ENCODE measurements at regions of chrX and their contacts with region 1.

Region 1: GRCh38 chrX:48917139-48918001 is 1.5 kb downstream of the PIM2 start:
- DNase-seq: peak; percentile 87
- H3K4me3 Mint-ChIP-seq: peak overlapping the region; percentile 98
- H3K27ac Mint-ChIP-seq: peak overlapping the region; percentile 97
- H3K4me1 Mint-ChIP-seq: peaks cover 35% of the 10 kb centered on the region
- H3K27me3 Mint-ChIP-seq: no peaks in the 10 kb centered on the region

Region 2: DNA sequence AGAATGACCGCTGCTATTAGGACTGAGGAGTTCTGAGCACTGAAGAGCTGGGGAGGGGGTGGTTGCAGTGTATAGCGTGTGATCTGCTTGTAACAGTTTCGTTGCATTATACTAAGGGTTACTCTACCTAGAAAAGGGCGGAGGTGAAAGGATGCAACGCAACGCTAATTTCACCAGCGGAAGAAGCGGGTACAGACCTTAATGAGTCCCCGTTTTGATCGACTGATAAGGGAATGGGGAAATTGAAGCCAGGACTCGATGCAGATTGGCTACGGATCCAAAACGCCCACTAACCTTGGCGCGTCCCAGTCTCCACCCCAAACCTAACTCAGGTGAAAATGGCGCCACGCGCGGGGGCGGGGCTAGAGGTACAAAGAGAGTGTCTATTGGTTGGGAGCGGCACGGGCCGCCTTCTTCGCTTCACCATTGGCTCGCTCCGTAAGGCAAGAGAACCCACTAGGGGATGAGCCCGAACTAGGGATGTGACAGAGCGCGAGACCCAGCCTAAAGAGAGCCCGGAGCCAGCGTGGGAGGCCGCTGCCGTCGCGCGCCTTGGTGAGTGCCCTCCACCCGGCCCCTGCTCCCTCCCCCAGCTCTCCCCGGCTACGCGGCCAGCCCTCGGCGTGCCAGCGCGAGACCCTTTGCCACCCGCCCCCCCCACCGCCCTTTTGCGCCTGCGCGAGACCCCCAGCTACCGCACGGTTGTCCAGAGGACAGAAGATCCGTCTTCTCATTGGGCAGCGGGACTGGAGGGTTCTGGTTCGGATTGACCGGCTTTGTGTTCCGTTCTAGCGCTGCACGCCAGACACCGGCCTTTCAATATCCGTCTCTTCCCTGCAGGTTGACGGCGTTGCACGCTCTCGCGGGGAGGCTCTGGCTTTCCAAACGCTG is 395.8 kb before region 1 on chrX and contains the start of gene EBP:
- intact Hi-C with region 1: loop called (anchors 5 kb)
- DNase-seq: peak; percentile 92
- H3K4me3 Mint-ChIP-seq: peak within 1 kb of the TSS; percentile 95
- H3K27ac Mint-ChIP-seq: peak within 1 kb of the TSS; percentile 98
- H3K4me1 Mint-ChIP-seq: peaks cover 34% of the 10 kb centered on the region
- H3K27me3 Mint-ChIP-seq: no peaks in the 10 kb centered on the region
- total RNA-seq, gene EBP: 164 and 178 TPM in 2 replicates

Region 3: GRCh38 chrX:48737213-48737938 is 180.0 kb before region 1 on chrX:
- intact Hi-C with region 1: loop called (anchors 5 kb)
- DNase-seq: peak; percentile 85
- H3K4me3 Mint-ChIP-seq: peak overlapping the region; percentile 98
- H3K27ac Mint-ChIP-seq: peak overlapping the region; percentile 98
- H3K4me1 Mint-ChIP-seq: peaks cover 23% of the 10 kb centered on the region
- H3K27me3 Mint-ChIP-seq: no peaks in the 10 kb centered on the region

Region 4: DNA sequence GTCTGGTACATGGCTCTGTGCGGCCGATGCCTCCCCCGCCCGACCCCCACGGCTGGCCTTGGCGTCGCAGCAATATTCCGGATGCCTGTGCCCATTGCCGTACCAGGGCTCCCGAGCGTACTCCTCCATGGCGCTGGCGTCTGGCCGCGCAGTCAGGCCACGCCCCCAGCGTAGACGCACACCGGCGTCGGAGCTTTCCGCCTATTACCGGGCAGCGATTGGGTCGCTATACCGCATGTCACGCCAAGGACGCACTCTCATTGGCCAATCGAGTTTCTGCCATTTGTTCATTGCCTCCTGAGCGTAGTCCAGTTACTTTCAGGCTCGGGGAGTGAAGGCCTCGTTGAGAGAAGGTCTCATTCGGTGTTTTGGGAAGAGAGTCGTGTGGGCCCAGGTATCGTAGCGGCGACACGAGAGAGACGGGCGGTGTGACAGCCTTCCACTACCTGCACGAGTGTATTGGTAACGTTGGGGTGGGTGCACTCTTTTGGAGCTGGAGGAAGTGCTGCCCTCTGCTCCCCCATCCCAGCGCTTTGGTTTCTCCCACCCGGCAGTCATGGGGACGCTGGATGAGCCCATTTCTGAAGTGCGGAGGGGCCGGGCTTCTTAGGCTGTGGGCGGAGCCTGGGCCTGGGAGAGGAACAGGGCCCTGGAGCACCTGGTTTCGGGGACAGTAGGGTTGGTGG is 19.6 kb before region 1 on chrX and contains the starts of genes PQBP1 and TIMM17B:
- intact Hi-C with region 1: loop called (anchors 1 kb)
- DNase-seq: peak; percentile 84
- H3K4me3 Mint-ChIP-seq: peak within 1 kb of the TSS; percentile 97
- H3K27ac Mint-ChIP-seq: peak within 1 kb of the TSS; percentile 100
- H3K4me1 Mint-ChIP-seq: peaks cover 8% of the 10 kb centered on the region
- H3K27me3 Mint-ChIP-seq: no peaks in the 10 kb centered on the region
- total RNA-seq, gene PQBP1: 112 and 119 TPM in 2 replicates
- total RNA-seq, gene TIMM17B: 72.2 and 72.3 TPM in 2 replicates

Region 5: DNA sequence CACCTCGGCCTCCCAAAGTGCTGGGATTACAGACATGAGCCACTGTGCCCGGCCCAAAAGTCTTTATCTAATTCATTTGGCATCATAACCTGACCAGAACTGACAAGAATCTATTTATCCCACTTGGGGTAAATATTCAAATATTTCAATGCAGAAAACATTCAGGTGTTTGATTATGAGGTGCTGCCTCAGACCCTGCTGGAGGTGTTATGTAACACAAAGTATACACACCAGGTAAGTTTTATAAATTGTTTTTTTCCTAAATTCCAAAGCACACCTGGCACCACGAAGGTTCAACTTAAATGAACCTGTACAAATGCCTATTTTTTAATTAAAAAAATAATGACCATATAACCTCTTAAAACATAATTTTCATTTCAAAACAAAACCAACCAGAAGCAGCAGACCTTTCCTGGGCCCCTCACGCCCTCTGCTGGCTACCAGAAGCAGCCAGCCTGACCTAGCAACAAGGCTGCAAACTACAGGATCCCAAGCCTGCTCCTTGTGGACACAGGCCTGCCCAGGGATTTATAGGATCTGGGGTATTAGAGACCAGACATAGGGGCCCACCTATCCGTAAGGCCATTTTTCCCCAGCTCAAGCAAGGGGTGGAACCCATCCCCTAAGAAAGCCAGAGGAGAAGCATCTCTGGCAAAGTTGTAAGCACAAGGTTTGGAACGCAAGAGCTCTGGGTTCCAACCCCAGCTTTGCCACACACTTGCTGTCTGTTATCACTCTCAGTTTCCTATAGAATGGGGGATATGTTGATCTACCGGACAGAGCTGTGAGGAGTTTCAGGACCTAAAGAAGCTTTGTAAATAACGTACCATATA is 28.4 kb after region 1 on chrX:
- intact Hi-C with region 1: loop called (anchors 1 kb)
- DNase-seq: no peak
- H3K4me3 Mint-ChIP-seq: peak overlapping the region; percentile 17
- H3K27ac Mint-ChIP-seq: no peak overlapping the region
- H3K4me1 Mint-ChIP-seq: peaks cover 34% of the 10 kb centered on the region
- H3K27me3 Mint-ChIP-seq: no peaks in the 10 kb centered on the region

Region 6: DNA sequence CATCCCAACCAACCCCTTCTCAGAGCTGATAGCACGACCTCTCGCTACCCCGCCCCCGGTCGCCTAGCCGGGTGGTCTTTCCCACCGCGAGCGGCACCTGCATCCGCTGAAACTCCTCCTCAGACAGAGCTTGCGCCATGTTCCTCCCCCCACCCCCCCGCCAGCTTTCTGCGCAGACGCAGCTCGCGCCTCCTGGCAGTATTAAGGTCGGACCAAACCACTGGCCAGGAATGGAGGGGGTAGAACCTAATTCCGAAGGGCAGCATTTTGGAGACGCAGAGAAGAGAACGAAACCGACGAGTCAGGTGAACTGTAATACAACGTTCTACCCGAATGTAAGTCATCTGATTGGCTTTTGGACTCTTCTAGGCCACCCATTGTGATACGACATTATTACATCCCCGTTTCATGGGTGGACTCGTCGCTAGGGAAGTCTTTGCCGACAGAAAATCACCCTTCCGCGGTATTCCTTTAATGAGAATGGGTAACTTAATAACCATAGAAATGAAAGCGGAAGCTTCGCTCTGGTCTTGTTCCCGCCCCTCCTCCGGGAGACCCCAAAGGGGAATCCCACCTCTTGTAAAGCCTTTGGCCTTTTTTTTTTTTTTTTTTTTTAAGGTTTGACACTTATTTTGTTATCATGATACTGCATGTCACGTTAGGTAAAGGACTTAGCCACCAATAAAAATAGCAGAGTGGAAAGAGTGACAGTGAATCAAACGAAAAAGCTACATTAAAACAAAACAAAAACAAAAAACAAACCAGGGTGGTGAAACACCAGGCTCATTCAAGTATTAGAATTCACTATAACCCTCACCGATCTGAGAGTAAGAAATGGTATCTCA is 84.9 kb after region 1 on chrX and contains the start of gene GRIPAP1:
- intact Hi-C with region 1: loop called (anchors 5 kb)
- DNase-seq: peak; percentile 68
- H3K4me3 Mint-ChIP-seq: peak within 1 kb of the TSS; percentile 99
- H3K27ac Mint-ChIP-seq: peak within 1 kb of the TSS; percentile 96
- H3K4me1 Mint-ChIP-seq: peaks cover 35% of the 10 kb centered on the region
- H3K27me3 Mint-ChIP-seq: no peaks in the 10 kb centered on the region
- total RNA-seq, gene GRIPAP1: 85.8 and 89.2 TPM in 2 replicates